ENCODE measurements at regions of chr9 and their contacts with region 1.

Region 1: GRCh38 chr9:128552153-128552743 is at the start of gene SPTAN1:
- H3K4me3 Mint-ChIP-seq: no peak within 1 kb of the TSS
- H3K27ac Mint-ChIP-seq: no peak within 1 kb of the TSS
- H3K4me1 Mint-ChIP-seq: peaks cover 37% of the 10 kb centered on the region
- H3K27me3 Mint-ChIP-seq: no peaks in the 10 kb centered on the region

Region 2: DNA sequence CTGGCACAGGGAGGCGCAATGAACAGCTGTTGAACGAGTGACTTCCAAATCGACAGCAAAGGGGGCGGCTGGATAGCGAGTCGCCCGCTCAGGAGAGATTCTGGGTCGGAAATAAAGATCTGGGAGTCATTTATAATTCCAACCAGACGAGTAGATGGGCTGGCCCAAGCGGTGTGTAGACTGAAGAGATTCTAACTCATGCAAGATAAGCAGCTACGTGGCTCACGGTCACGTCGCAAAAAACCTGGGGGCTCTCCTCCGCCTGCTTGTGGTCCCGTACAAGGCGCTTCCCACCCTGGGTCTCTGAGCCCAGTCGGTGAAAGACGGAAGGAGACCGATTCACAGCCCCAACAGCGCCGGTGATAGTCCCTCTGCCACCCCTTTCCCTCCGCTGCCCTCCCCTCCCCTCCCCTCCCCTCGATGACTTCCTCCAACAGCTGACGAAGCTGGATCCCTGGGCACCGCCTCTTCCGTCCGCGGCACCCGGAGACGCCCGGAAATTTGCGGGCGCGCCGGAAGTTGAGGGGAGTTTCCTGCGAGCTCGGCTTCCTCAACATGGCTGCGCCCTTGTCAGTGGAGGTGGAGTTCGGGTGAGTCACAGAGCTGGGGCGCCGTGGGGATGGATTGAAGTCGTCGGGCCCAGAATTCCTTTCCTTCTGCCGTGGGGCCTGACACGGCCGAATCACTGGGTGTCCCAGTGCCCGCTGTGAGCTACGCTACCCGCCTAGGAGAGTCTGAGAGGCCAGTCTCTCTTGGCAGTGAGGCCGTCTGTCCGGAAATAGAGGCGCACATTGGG is 181.2 kb before region 1 on chr9 and contains the start of gene URM1:
- intact Hi-C with region 1: loop called (anchors 10 kb)
- H3K4me3 Mint-ChIP-seq: peak within 1 kb of the TSS; percentile 92
- H3K27ac Mint-ChIP-seq: peak within 1 kb of the TSS; percentile 92
- H3K4me1 Mint-ChIP-seq: peaks cover 40% of the 10 kb centered on the region
- H3K27me3 Mint-ChIP-seq: no peaks in the 10 kb centered on the region

Region 3: GRCh38 chr9:128504485-128505413 is 47.5 kb before region 1 on chr9 and contains the start of gene GLE1:
- intact Hi-C with region 1: loop called (anchors 2 kb)
- H3K4me3 Mint-ChIP-seq: peak within 1 kb of the TSS; percentile 99
- H3K27ac Mint-ChIP-seq: peak within 1 kb of the TSS; percentile 93
- H3K4me1 Mint-ChIP-seq: peaks cover 14% of the 10 kb centered on the region
- H3K27me3 Mint-ChIP-seq: no peaks in the 10 kb centered on the region

Measured in dendritic cell treated with granulocyte-macrophage colony-stimulating factor and Interleukin-4, amounts not matched to agents 40 ng/mL and 50 ng/mL, for 4 days (primary cell).